ENCODE measurements at regions of chr9 and their contacts with region 1.

Region 1: DNA sequence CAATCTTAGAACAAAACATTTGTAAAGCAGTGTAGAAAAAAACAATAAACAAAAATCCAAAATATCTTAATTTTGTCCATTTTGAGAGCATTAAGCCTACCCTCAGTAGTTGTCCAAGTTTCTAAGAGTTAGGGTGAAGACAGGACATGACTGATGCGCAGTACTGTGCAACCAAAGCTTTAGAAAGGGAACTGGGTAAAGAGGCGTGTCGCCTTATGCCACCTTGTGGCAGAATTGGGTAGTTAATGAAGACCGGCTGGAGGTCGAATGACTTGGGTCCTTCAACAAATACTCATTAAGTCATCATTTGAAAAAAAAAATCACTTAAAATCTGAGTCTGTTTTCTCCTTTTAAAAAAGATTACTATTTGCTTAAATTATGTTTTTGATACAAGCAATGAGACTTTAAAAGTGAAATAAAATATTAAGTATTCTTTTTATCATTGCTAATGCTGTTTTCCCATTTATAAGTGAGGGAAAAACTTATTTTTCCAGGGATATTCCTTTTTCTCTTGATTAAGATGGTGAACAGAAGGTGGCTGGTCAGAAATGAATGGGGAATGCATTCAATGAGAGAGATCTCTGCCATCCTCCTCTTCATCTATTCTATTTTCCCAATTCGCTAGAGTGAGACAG is 3.5 kb upstream of the RNF20 start:
- DNase-seq: peak; percentile 57
- H3K4me3 ChIP-seq: no peak overlapping the region
- H3K27ac ChIP-seq: no peak overlapping the region
- H3K4me1 ChIP-seq: peaks cover 7% of the 10 kb centered on the region
- H3K27me3 ChIP-seq: no peaks in the 10 kb centered on the region
- CTCF ChIP-seq: peak; percentile 73 to 82

Region 2: DNA sequence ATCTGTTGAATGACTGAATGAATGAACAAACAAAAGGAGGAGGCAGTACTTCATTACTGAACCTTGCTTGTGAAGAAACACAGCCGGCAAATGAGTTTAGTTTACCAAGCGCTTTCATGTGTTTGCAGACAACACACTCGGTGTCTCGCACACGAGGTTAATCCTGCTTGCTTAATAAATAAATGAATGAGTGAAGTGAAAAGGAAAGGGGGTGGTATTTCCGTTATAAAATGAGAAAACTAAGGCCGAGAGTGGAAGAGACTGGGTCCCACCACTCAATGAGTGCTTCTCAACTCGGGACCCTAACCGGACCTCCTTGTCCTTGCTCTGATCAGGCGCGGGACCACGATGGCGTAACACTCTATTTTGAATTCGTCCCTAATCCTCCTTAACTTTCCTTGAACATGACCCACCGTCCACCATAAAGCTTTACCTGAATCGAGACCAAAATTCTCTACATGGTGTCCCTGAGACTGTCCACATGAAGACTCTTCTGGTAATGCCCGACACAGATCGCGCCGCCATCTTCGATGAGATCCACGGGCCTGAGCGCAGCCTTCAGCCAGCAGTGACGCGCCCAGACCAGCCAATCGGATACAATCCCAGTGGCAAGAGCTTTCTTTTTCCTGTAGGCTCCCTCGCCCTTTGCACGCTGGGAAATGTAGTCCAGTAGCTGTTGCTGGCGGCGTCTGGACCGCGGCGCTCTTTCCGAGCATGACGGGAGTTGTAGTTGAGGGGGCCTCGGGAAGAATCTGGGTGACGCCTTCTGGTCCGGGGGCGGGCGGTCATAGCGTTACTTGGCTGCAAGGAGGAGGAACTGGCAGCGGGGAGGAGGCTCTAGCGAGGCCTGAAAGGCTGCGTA is 131.9 kb before region 1 on chr9 and contains the starts of genes MRPL50 and ZNF189:
- CTCF ChIA-PET with region 1: no interaction called
- dilution Hi-C with region 1: no loop called
- in situ Hi-C with region 1: no loop called
- intact Hi-C with region 1: loop called (anchors 1 kb)
- DNase-seq: peak; percentile 99
- H3K4me3 ChIP-seq: peak within 1 kb of the TSS; percentile 81 to 99 (median 97)
- H3K27ac ChIP-seq: peak within 1 kb of the TSS; percentile 96
- H3K4me1 ChIP-seq: peaks cover 15% of the 10 kb centered on the region
- H3K27me3 ChIP-seq: no peaks in the 10 kb centered on the region
- CTCF ChIP-seq: no peak
- total RNA-seq, gene MRPL50: 12.4 to 13.0 TPM
- total RNA-seq, gene ZNF189: 12.3 to 17.5 TPM

Region 3: GRCh38 chr9:101458955-101459631 is 71.1 kb before region 1 on chr9:
- CTCF ChIA-PET with region 1: interaction called, 17 read pairs
- dilution Hi-C with region 1: loop called (anchors 5 kb)
- in situ Hi-C with region 1: loop called in 1 of 2 experiments (anchors 5 kb)
- intact Hi-C with region 1: loop called (anchors 1 kb)
- DNase-seq: peak; percentile 68
- H3K4me3 ChIP-seq: no peak overlapping the region
- H3K27ac ChIP-seq: no peak overlapping the region
- H3K4me1 ChIP-seq: no peaks in the 10 kb centered on the region
- H3K27me3 ChIP-seq: no peaks in the 10 kb centered on the region
- CTCF ChIP-seq: peak; percentile 70 to 88

Region 4: GRCh38 chr9:101486693-101487442 is 43.3 kb before region 1 on chr9:
- CTCF ChIA-PET with region 1: no interaction called
- dilution Hi-C with region 1: no loop called
- in situ Hi-C with region 1: no loop called
- intact Hi-C with region 1: no loop called
- DNase-seq: peak; percentile 70
- H3K4me3 ChIP-seq: peak overlapping the region; percentile 26 to 49 (median 48)
- H3K27ac ChIP-seq: no peak overlapping the region
- H3K4me1 ChIP-seq: peaks cover 14% of the 10 kb centered on the region
- H3K27me3 ChIP-seq: peaks cover 3% of the 10 kb centered on the region
- CTCF ChIP-seq: peak in 1 of 2 donors; percentile 11

Region 5: GRCh38 chr9:101498323-101498722 is 31.9 kb before region 1 on chr9:
- CTCF ChIA-PET with region 1: no interaction called
- dilution Hi-C with region 1: no loop called
- in situ Hi-C with region 1: no loop called
- intact Hi-C with region 1: no loop called
- DNase-seq: no peak
- H3K4me3 ChIP-seq: no peak overlapping the region
- H3K27ac ChIP-seq: no peak overlapping the region
- H3K4me1 ChIP-seq: no peaks in the 10 kb centered on the region
- H3K27me3 ChIP-seq: no peaks in the 10 kb centered on the region
- CTCF ChIP-seq: no peak